ENCODE measurements at regions of chr3 and their contacts with region 1.

Region 1: DNA sequence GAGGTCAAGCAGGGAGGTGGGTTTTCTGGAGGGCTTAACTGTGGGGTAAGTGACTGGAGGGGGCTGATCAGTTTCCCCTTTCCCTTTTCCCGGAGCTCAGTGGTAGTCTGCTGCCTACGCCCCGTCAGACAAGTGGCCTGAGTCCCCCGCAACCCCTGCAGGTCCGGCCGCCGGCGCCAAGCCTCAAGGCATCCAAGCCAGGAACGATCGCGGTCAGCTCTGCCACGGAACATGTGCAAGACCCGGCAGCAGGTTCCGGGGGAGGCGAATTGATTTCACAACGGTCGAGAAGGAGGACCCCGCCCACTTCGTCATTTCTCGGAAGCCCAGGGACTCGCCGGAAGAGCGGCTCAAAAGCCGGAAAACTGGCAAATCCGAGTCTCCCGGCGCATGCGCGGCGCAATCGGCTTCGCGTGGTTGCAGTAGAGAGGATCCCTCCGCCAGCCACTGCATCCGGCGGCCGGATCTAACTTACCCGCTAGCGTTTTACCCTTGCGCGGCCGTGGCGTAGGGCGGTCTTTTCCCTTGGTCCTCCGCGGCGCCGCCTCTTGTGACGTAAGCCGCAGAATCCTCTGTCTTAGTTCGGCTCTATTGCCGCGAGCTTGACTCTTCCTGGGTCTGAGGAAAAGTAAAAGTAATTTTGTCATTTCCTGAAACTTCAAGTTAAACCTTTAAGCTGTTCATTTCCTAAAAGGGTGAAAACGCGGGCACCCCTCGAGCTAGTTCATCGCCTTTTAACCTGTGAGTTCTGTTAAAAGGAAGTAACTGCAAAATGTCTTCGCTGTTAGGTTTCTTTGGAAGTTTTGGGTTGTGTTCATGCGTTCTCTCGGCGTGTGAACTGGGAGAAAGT is 14.9 kb upstream of the CCNL1 start:
- DNase-seq: peak; percentile 95 to 99 (median 99)
- H3K4me3 ChIP-seq: peak overlapping the region; percentile 82 to 95
- H3K4me3 Mint-ChIP-seq: peak overlapping the region; percentile 85 to 96 (median 93)
- H3K27ac ChIP-seq: peak overlapping the region; percentile 94
- H3K27ac Mint-ChIP-seq: peak overlapping the region; percentile 94 to 99 (median 98)
- H3K4me1 ChIP-seq: peaks cover 22% of the 10 kb centered on the region
- H3K4me1 Mint-ChIP-seq: peaks cover 10 to 30% (median 21%) of the 10 kb centered on the region in 4 donors
- H3K27me3 ChIP-seq: no peaks in the 10 kb centered on the region
- H3K27me3 Mint-ChIP-seq: no peaks in the 10 kb centered on the region

Region 2: DNA sequence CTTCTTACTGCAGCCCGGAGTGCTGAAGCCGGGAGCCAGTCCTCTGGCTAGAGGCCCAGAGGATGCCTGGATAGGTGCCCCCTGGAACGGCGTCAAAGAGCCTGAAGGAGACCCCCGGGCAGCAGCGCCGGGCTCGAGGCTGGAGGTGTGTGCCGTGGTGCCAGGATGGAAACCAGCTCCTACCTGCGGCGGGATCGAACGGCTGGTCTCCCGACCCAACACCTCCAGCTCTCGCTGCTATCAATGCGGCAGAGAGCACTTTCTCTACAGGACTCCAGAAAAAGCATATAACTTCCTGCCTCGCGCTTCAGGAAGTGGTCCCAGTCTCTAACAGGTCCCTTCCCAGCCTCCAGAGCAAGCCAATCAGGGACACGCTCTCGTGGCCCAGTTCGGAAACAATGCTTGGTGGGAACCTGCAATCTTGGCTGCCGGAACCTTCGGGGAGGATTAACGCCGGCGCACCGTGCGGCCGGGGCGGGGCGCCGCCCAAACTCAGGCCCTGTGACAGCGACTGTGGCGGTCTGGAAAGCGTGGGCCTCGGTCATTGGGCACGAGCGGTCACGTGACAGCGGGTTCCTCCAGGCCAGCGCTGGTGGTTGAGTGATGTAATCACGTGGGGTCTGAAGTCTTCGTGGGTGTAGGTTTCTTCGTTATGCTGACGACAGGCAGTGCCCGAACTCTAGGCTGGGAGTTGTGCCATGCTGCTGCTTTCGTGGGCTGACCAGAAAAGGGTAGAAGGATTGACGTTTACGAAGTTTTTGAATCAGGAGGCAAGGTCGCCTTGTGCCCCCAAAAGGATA is 1320.5 kb before region 1 on chr3 and contains the start of gene SLC33A1:
- CTCF ChIA-PET with region 1: no interaction called
- POLR2A ChIA-PET with region 1: interaction called, 8 read pairs
- intact Hi-C with region 1: loop called (anchors 1 kb)
- DNase-seq: peak; percentile 99
- H3K4me3 ChIP-seq: peak within 1 kb of the TSS; percentile 98
- H3K4me3 Mint-ChIP-seq: peak within 1 kb of the TSS; percentile 89 to 98 (median 96)
- H3K27ac ChIP-seq: peak within 1 kb of the TSS; percentile 77
- H3K27ac Mint-ChIP-seq: peak within 1 kb of the TSS; percentile 94 to 100 (median 99)
- H3K4me1 ChIP-seq: peaks cover 44% of the 10 kb centered on the region
- H3K4me1 Mint-ChIP-seq: peaks cover 27 to 58% (median 38%) of the 10 kb centered on the region in 4 donors
- H3K27me3 ChIP-seq: no peaks in the 10 kb centered on the region
- H3K27me3 Mint-ChIP-seq: no peaks in the 10 kb centered on the region
- total RNA-seq, gene SLC33A1: 44.9 to 45.8 TPM

Region 3: DNA sequence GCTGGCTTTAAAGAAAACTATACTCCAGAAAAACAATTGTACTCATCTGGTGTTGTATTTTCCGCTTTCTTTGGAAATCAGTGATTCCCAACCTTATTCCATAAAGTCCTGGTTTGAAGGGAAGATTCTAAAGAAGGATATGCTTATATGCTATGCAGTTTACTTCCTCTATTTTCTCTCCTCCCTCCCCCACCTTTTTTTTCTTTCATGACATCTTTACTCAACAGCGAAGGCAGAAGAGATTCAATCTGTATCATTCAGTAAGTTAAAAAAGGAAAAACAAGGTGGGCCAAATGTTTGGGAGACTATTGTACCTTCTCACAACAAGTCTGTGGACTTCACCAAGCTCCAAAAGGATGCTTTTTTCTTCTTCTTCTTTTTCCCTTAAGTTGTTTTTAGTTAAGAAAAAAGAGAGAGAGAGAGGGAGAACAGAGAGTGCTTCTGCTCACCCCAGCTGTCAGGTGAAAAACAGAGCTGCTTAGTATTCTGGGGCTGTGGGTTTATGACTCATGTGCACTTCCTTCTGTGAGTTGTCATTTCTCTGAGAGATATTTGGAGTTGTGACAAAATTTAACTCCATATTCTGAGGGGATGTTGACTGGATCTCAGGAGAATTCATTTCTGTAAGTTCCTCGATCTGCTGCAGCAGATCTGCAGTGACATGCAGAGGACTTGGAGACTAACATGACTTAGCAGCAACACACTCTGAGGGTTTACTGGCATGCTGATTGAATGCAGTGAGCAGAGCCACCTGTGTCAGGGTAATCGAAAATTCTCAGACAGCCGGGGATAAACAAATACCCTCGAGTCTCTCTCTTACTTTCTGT is 690.7 kb before region 1 on chr3:
- CTCF ChIA-PET with region 1: no interaction called
- POLR2A ChIA-PET with region 1: interaction called, 15 read pairs
- intact Hi-C with region 1: no loop called
- DNase-seq: peak; percentile 55 to 81 (median 64)
- H3K4me3 ChIP-seq: peak overlapping the region; percentile 42 to 55
- H3K4me3 Mint-ChIP-seq: peak overlapping the region; percentile 21 to 87 (median 77)
- H3K27ac ChIP-seq: peak overlapping the region; percentile 63
- H3K27ac Mint-ChIP-seq: peak overlapping the region; percentile 77 to 94 (median 92)
- H3K4me1 ChIP-seq: peaks cover 43% of the 10 kb centered on the region
- H3K4me1 Mint-ChIP-seq: peaks cover 32 to 52% (median 39%) of the 10 kb centered on the region in 4 donors
- H3K27me3 ChIP-seq: no peaks in the 10 kb centered on the region
- H3K27me3 Mint-ChIP-seq: no peaks in the 10 kb centered on the region

Region 4: GRCh38 chr3:157148196-157148889 is 26.5 kb before region 1 on chr3:
- CTCF ChIA-PET with region 1: no interaction called
- POLR2A ChIA-PET with region 1: interaction called, 11 read pairs
- intact Hi-C with region 1: no loop called
- DNase-seq: no peak
- H3K4me3 ChIP-seq: no peak overlapping the region
- H3K4me3 Mint-ChIP-seq: no peak overlapping the region
- H3K27ac ChIP-seq: peak overlapping the region; percentile 12
- H3K27ac Mint-ChIP-seq: peak overlapping the region; percentile 68 to 88 (median 75)
- H3K4me1 ChIP-seq: peaks cover 31% of the 10 kb centered on the region
- H3K4me1 Mint-ChIP-seq: peaks cover 19 to 47% (median 29%) of the 10 kb centered on the region in 4 donors
- H3K27me3 ChIP-seq: no peaks in the 10 kb centered on the region
- H3K27me3 Mint-ChIP-seq: no peaks in the 10 kb centered on the region

Region 5: DNA sequence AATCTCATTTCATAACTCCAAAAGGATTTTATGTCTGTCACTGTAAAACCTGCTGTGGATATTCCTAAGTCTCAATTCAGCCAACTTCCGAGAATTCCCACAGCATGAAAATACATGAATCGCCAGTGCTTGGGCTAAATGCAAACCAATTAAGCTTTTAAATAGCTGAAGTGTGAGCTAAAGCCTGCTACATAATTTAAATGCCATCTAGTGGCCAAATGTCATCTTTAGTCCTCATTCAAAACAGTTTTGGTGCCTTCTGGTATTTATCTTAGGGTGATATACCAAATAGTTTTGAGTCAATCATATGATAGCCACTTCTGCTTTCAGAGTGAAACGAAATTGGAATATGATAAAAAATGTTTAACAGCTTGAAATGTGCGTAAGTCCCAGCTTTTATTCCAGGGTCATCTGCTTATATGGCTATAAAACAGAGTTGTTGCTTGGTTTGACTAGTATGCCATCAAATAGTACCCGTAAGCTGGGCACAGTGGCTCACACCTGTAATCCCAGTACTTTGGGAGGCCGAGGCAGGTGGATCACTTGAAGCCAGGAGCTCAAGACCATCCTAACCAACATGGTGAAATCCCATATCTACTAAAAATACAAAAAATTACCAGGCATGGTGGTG is 26.9 kb after region 1 on chr3:
- CTCF ChIA-PET with region 1: interaction called, 13 read pairs
- POLR2A ChIA-PET with region 1: interaction called, 16 read pairs
- intact Hi-C with region 1: loop called (anchors 1 kb)
- DNase-seq: peak in 3 of 5 donors; percentile 11 to 26 (median 23)
- H3K4me3 ChIP-seq: no peak overlapping the region
- H3K4me3 Mint-ChIP-seq: no peak overlapping the region
- H3K27ac ChIP-seq: no peak overlapping the region
- H3K27ac Mint-ChIP-seq: no peak overlapping the region
- H3K4me1 ChIP-seq: no peaks in the 10 kb centered on the region
- H3K4me1 Mint-ChIP-seq: no peaks in the 10 kb centered on the region
- H3K27me3 ChIP-seq: no peaks in the 10 kb centered on the region
- H3K27me3 Mint-ChIP-seq: no peaks in the 10 kb centered on the region

Region 6: DNA sequence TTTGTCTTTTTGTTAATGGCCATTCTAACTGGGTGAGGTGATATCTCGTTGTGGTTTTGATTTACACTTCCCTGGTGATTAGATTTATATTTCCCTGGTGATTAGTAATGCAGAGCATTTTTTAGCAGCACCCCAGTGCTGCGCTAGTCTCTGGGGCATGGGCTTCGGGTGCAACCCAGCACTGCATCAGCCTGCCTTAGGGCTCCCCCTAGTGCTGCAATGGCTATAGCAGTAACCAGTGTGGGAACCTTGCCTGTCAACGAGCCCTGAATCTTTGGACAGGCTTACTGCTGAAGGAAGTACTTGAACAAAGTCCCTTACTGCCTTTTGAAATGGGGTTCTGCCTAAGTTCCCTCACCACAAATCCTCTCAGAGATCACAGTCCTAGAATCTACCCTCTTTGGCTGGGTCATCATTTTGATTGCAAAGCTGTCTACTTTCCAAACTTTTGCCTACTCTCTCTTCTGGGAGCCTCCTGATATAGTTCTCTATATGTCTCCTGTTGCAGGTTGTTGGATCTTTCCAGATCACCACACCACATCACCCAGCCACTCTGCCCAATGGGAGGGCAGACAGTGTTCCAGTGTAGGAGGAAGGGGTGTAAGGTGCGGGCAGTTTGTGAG is 64.3 kb after region 1 on chr3:
- CTCF ChIA-PET with region 1: interaction called, 4 read pairs
- POLR2A ChIA-PET with region 1: no interaction called
- intact Hi-C with region 1: loop called (anchors 1 kb)
- DNase-seq: peak; percentile 55 to 70 (median 65)
- H3K4me3 ChIP-seq: no peak overlapping the region
- H3K4me3 Mint-ChIP-seq: no peak overlapping the region
- H3K27ac ChIP-seq: no peak overlapping the region
- H3K27ac Mint-ChIP-seq: peak overlapping the region in 2 of 7 donors; percentile 29 to 32
- H3K4me1 ChIP-seq: no peaks in the 10 kb centered on the region
- H3K4me1 Mint-ChIP-seq: peaks cover 0 to 5% (median 3%) of the 10 kb centered on the region in 4 donors
- H3K27me3 ChIP-seq: no peaks in the 10 kb centered on the region
- H3K27me3 Mint-ChIP-seq: peaks cover 1 to 4% of the 10 kb centered on the region in 2 donors

Region 7: DNA sequence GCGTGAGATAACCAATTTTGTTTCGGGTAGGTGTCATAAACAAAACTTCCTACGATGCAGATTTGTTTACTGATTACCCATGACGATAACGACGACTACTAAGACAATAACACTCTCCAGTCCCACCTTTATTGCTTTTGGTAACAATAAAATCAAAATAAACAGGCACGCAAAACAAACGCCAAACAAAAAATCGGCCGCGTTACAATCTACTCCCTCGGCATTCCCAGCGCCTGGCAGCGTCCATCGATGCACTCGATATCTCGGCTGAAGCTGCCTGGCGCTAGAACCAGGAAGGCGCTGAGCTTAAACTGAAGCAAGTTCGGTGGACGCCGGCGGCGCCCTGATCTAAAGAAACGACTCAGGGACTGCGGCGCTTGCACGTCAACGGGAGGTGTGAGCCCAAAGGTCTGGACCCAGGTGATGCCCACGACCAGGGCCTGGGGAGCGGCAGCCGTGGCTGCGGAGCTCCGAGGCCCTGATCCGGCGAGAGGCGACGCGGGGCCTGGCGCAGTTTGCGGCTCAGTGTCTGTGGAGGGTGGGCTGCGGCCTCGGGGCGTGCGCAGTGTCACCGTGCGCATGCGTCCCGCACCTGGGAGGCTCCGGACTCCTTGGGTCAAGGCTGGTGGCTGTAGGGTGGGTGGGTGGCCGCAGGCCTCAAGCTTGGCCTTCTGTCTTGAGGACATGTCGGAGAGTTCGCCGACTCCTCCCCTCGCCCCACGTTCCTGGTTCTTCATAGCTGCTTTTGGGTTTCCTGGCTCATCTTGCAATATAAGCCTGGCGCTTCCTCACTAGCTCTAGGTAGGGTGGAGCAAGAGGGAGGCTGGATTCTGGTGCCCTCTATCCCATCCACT is 935.2 kb after region 1 on chr3 and contains the start of gene RSRC1:
- CTCF ChIA-PET with region 1: no interaction called
- POLR2A ChIA-PET with region 1: no interaction called
- intact Hi-C with region 1: loop called (anchors 10 kb)
- DNase-seq: peak; percentile 75 to 84 (median 78)
- H3K4me3 ChIP-seq: peak within 1 kb of the TSS; percentile 59 to 82
- H3K4me3 Mint-ChIP-seq: peak within 1 kb of the TSS; percentile 84 to 100 (median 96)
- H3K27ac ChIP-seq: peak within 1 kb of the TSS; percentile 51
- H3K27ac Mint-ChIP-seq: peak within 1 kb of the TSS; percentile 74 to 98 (median 90)
- H3K4me1 ChIP-seq: peaks cover 50% of the 10 kb centered on the region
- H3K4me1 Mint-ChIP-seq: peaks cover 43 to 78% (median 52%) of the 10 kb centered on the region in 4 donors
- H3K27me3 ChIP-seq: peaks cover 38% of the 10 kb centered on the region
- H3K27me3 Mint-ChIP-seq: peaks cover 29 to 30% of the 10 kb centered on the region in 2 donors
- total RNA-seq, gene RSRC1: 34.1 to 35.7 TPM

Measured in CD4-positive, alpha-beta memory T cell (primary cell).